Ascending aorta (tissue), 2 donors: ENCODE measurements at regions of chr7 and their contacts with region 1.

Region 1: GRCh38 chr7:7535691-7536090 is at the start of gene COL28A1:
- DNase-seq: no peak
- H3K4me3 ChIP-seq: no peak within 1 kb of the TSS
- H3K27ac ChIP-seq: no peak within 1 kb of the TSS
- H3K4me1 ChIP-seq: no peaks in the 10 kb centered on the region
- H3K27me3 ChIP-seq: no peaks in the 10 kb centered on the region
- CTCF ChIP-seq: no peak
- total RNA-seq, gene COL28A1: 0.11 TPM

Region 2: DNA sequence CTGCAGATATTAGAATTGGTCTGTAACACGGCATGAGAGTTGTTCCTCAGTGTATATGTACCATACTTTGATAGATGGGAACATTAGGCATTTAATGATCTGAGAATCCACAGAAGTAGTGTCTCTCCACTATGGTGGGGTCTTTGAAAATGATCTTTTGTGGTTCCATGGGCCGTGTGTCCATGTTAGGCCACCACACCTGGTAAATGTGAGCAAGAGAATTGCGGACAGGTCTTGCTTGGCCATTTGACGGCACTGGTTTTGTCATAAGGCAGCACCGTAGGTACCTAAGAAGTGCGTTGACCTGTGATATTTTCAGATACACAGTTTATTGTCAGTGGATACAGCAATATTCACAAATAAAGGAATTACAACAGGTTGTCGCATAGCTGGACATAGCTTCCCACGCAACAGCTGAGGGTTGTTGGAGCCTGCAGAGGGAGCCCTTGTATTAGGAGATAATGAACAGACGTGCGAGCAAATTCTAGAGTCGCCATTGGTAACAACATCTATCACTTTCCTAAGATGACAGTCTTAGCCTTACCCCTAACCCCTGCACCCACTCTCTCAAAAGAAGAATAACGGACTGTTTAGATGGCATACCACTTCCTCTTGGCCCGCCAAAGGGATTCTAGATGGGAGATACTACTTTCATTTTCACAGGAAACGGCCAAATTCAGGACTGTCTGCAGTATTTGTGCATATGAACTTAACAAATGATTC is 111.4 kb before region 1 on chr7:
- intact Hi-C with region 1: loop called (anchors 10 kb)
- DNase-seq: peak; percentile 11 to 71
- H3K4me3 ChIP-seq: peak overlapping the region; percentile 50 to 60
- H3K27ac ChIP-seq: no peak overlapping the region
- H3K4me1 ChIP-seq: no peaks in the 10 kb centered on the region
- H3K27me3 ChIP-seq: no peaks in the 10 kb centered on the region
- CTCF ChIP-seq: peak; percentile 47 to 70 (median 53)

Region 3: GRCh38 chr7:7554021-7554432 is 18.3 kb after region 1 on chr7:
- intact Hi-C with region 1: no loop called
- DNase-seq: no peak
- H3K4me3 ChIP-seq: no peak overlapping the region
- H3K27ac ChIP-seq: peak overlapping the region; percentile 15 to 16
- H3K4me1 ChIP-seq: no peaks in the 10 kb centered on the region
- H3K27me3 ChIP-seq: no peaks in the 10 kb centered on the region
- CTCF ChIP-seq: no peak

Region 4: DNA sequence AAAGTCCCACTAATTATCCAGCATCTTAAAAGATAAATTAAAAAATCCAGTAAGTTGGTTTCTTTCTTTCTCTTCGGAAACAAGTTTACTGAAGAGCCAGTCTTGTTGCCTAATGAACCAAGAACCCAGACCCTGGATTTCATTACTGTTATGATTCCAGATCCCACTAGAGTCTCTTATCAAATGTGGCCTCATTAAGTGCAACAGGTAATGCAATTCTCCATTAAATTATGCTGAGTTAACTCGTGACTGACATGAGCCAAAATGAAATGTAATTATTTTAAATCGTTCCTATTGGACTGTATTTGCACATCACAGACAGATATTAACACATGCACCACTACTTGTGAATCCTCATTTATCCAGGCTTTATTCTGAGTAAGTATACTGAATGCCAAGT is 1013.4 kb after region 1 on chr7:
- intact Hi-C with region 1: no loop called
- DNase-seq: no peak
- H3K4me3 ChIP-seq: no peak overlapping the region
- H3K27ac ChIP-seq: no peak overlapping the region
- H3K4me1 ChIP-seq: no peaks in the 10 kb centered on the region
- H3K27me3 ChIP-seq: no peaks in the 10 kb centered on the region
- CTCF ChIP-seq: no peak